ENCODE measurements at regions of chr19 and their contacts with region 1.

Region 1: GRCh38 chr19:50476224-50476942 is at the starts of genes EMC10 and GARIN5A:
- DNase-seq: peak; percentile 94
- H3K4me3 ChIP-seq: peak within 1 kb of the TSS; percentile 76 to 96 (median 79)
- H3K27ac ChIP-seq: peak within 1 kb of the TSS; percentile 87 to 88 (median 88)
- H3K4me1 ChIP-seq: peaks cover 6 to 16% (median 10%) of the 10 kb centered on the region in 4 donors
- H3K27me3 ChIP-seq: no peaks in the 10 kb centered on the region
- CTCF ChIP-seq: peak in 1 of 5 experiments; percentile 25
- EP300 ChIP-seq: peak; percentile 18
- POLR2A ChIP-seq: peak; percentile 84
- total RNA-seq, gene EMC10: 50.5 to 117 (median 78.7) TPM
- total RNA-seq, gene GARIN5A: 0.55 to 4.2 (median 0.79) TPM in 3 of 4 donors, not detected in the other

Region 2: DNA sequence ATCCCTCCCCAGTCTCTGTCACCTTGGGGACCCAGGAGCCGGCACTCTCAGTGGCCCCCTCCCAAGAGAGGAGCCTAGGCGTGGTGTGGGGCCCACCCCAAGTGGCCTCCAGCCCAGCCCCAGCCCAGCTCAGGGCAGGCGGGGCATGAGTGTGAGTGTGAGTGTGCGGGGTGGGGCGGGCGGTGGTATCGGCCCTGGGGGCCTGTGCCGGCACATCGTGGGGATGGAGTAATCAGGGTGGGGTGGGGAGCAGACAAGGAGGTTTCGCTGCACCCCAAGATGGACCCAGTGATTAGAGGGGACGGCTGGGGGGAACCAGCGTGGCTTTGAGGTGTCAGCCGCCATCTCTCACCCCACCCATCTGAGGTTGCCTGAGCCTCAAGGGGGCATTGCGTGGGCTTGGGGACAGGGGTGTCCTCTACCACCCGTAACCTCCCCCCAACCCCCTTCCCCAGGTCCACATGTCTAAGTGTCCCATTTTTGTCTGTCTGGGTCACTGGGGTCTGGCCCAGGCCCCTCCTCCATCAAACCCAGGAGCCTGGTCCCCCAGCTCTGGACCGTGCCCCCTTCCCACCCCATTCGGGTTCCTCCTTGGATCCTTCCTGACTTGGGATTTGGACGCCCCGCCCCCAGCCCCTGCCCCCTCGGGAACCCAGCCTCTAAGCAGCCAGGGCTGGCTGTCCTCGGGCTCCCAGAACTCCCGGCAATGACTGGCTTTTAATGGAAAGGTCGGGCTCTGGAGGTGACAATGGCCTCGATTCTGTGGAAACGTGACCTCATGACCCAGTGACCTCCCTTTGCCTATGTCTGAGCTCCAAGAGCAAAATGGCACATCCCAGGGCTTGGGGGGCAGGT is 1931.3 kb before region 1 on chr19:
- in situ Hi-C with region 1: no loop called
- intact Hi-C with region 1: loop called (anchors 5 kb)
- DNase-seq: no peak
- H3K4me3 ChIP-seq: no peak overlapping the region
- H3K27ac ChIP-seq: no peak overlapping the region
- H3K4me1 ChIP-seq: peaks cover 0 to 9% (median 7%) of the 10 kb centered on the region in 4 donors
- H3K27me3 ChIP-seq: peaks cover 42% of the 10 kb centered on the region
- CTCF ChIP-seq: no peak
- EP300 ChIP-seq: no peak
- POLR2A ChIP-seq: no peak

Region 3: GRCh38 chr19:50258918-50259372 is 217.4 kb before region 1 on chr19:
- in situ Hi-C with region 1: no loop called
- intact Hi-C with region 1: no loop called
- DNase-seq: peak; percentile 24
- H3K4me3 ChIP-seq: no peak overlapping the region
- H3K27ac ChIP-seq: no peak overlapping the region
- H3K4me1 ChIP-seq: no peaks in the 10 kb centered on the region
- H3K27me3 ChIP-seq: no peaks in the 10 kb centered on the region
- CTCF ChIP-seq: peak; percentile 17 to 46 (median 40)
- EP300 ChIP-seq: no peak
- POLR2A ChIP-seq: no peak

Measured in transverse colon (tissue), 4 donors.